HepG2 (cell line): ENCODE measurements at regions of chr13 and their contacts with region 1.

Region 1: DNA sequence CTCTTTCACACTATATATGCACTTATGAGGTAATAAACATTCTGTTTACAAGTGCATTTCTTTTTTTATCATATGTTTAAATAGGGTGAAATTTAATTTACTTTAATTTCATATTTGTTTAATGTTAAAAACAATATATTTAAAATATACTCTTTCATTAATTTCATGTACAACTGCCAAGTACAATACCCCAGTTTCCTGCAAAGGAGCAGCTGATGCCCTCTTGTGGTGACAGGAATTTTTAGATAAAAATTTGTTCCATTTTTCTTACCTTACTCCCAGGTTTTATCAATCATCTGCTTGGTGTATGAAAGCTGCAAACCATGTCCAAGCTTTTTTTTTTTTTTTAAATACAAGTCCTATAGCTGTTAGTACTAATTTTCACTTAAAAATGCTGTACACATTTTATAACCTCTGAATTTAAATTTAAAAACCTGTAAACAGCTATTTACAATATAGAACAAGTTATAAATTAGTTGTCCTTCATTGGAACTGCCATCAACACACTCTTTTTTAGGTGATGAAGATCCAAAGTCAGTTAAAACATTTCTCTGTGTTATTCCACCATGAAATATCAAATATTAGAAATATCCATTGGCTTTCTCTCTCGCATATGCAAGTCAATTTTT is 4.9 kb downstream of the PCDH20 start:
- DNase-seq: peak; percentile 5
- ATAC-seq: no peak
- H3K4me3 ChIP-seq: no peak overlapping the region
- H3K27ac ChIP-seq: no peak overlapping the region
- H3K4me1 ChIP-seq: no peaks in the 10 kb centered on the region
- H3K27me3 ChIP-seq: peaks cover 5 to 28% of the 10 kb centered on the region in 2 experiments
- CTCF ChIP-seq: peak; percentile 21; the same call in 1 of the 2 replicates
- EP300 ChIP-seq: no peak
- POLR2A ChIP-seq: no peak
- RAD21 ChIP-seq: no peak

Region 2: GRCh38 chr13:60627071-60627686 is 783.6 kb before region 1 on chr13:
- CTCF ChIA-PET with region 1: no interaction called
- POLR2A ChIA-PET with region 1: no interaction called
- in situ Hi-C with region 1: loop called (anchors 25 kb)
- intact Hi-C with region 1: no loop called
- DNase-seq: peak; percentile 29
- ATAC-seq: peak; percentile 98
- H3K4me3 ChIP-seq: no peak overlapping the region
- H3K27ac ChIP-seq: no peak overlapping the region
- H3K4me1 ChIP-seq: no peaks in the 10 kb centered on the region
- H3K27me3 ChIP-seq: no peaks in the 10 kb centered on the region; a peak in 1 of 5 replicates
- CTCF ChIP-seq: peak; percentile 76
- EP300 ChIP-seq: no peak
- POLR2A ChIP-seq: no peak
- RAD21 ChIP-seq: peak; percentile 58

Region 3: DNA sequence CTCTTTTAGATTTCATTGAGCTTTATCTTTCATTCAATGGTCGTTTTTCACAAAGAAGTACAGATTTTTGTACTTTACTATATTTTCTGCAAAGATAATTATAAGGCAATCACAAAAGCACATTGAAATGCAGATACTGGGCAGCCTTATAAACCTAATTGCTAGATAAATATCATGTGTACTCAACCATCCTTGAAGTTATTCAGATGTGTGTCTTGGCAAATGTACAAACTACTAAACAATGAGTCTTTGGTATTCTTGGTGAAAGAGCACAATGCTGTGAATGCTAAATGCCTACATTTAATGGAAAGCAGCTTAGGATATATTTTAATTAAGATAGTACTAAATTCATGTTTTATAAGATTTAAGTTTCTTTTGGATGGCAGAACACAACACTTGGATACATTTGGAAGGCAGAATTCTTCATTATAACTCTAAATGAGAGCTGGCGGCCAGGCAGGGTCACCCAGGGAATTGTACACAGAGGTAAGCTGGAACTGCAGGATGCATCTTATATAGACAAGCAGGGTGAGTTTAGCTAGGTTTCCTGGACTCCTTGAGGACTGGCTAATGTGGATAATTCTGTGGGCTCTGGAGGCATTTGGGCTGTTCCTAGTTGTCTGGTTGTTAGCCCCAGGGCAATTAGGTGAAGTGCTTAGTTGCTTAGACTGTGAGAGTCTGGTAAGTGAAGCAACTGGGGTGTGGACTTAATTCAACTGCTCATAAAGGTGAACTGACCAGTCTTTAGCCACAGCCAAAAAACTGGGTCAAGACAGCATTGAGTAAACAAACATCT is 281.7 kb before region 1 on chr13:
- CTCF ChIA-PET with region 1: no interaction called
- POLR2A ChIA-PET with region 1: no interaction called
- in situ Hi-C with region 1: no loop called
- intact Hi-C with region 1: loop called (anchors 10 kb)
- DNase-seq: no peak
- ATAC-seq: no peak
- H3K4me3 ChIP-seq: no peak overlapping the region
- H3K27ac ChIP-seq: no peak overlapping the region
- H3K4me1 ChIP-seq: no peaks in the 10 kb centered on the region
- H3K27me3 ChIP-seq: no peaks in the 10 kb centered on the region
- CTCF ChIP-seq: no peak
- EP300 ChIP-seq: no peak
- POLR2A ChIP-seq: no peak
- RAD21 ChIP-seq: no peak

Region 4: DNA sequence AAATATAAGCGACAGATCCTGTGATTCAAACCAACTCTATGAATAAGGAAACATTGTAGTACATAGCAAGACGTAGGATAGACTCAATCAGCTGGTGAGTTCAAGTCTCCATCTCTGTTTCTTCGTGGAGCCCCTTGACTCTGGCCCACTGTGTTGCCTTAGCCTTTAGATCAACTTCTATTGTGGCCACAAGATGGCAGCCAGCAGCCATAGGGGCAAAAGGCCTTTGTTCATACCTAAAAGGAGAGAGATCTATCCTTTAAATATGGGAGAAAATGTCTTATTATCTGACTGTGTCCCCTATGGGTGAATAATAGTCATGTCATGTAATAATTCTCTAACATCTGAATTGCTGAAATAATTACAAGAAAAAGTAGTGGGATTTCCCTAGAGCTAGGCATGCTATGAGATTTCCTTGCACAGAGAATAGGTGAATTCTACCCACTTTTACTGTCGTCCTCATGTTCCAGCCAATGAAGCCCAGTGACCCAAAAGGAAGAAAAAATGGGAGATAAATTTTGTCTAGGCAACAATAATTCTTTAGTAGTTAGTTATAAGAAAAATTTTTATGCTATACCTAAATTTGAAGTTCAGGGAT is 124.5 kb before region 1 on chr13:
- CTCF ChIA-PET with region 1: no interaction called
- POLR2A ChIA-PET with region 1: no interaction called
- in situ Hi-C with region 1: no loop called
- intact Hi-C with region 1: loop called (anchors 5 kb)
- DNase-seq: peak; percentile 2
- ATAC-seq: peak; percentile 84
- H3K4me3 ChIP-seq: no peak overlapping the region
- H3K27ac ChIP-seq: no peak overlapping the region
- H3K4me1 ChIP-seq: no peaks in the 10 kb centered on the region
- H3K27me3 ChIP-seq: no peaks in the 10 kb centered on the region
- CTCF ChIP-seq: peak; percentile 51
- EP300 ChIP-seq: no peak
- POLR2A ChIP-seq: no peak
- RAD21 ChIP-seq: no peak